HepG2 (cell line): ENCODE measurements at regions of chr4 and their contacts with region 1.

Region 1: DNA sequence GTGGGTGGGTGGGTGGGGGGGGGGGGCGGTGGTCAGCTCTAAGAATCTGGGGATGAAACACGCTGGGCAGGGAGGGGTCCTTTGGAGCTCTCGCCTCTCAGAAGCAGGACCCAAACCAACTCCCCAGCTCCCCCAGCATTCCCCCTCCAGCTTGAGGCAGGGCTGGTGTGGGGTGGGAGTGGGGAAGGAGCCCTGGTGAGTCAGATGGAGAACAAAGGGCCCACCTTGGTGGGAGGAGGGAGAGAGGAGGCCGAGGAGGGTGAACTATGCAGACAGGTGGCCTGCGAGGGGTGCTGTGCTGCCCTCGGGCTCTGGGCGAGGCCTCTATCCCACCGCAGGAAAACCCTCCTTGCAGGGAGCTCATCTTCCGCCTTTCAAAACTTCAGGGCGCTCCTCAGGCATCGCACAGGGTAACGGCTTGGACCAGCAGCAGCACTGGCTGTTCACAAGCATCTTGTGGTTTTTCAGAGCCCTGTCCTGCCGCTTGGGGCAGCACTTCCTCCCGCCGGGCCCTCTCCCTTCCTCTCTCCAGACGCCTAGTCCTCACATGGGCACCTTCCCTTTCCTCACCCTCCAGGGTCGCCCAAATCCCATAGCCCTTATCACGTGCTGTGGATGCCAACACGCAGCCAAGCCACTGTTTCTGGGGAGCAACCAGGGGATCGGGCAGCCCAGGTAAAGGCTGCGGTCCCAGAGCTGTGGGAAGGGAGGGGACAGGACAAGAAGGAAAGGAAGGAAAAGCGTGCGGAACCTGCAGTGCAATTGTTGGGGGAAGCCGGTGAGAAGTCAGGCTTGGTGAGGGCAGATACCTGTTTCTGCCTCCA is 34.0 kb upstream of the GRPEL1 start:
- DNase-seq: peak; percentile 52
- ATAC-seq: peak; percentile 78
- H3K4me3 ChIP-seq: peak overlapping the region; percentile 80 to 88 (median 82); a peak in 5 of 6 replicates
- H3K27ac ChIP-seq: no peak overlapping the region
- H3K4me1 ChIP-seq: peaks cover 40% of the 10 kb centered on the region
- H3K27me3 ChIP-seq: peaks cover 0 to 12% of the 10 kb centered on the region in 2 experiments; a peak in 2 of 5 replicates
- CTCF ChIP-seq: peak; percentile 91
- EP300 ChIP-seq: no peak
- POLR2A ChIP-seq: no peak
- RAD21 ChIP-seq: peak; percentile 55; the same call in 1 of the 2 replicates

Region 2: GRCh38 chr4:7167706-7168105 is 65.8 kb after region 1 on chr4:
- CTCF ChIA-PET with region 1: no interaction called
- POLR2A ChIA-PET with region 1: interaction called, 7 read pairs
- in situ Hi-C with region 1: no loop called
- intact Hi-C with region 1: loop called (anchors 2 kb)
- DNase-seq: peak; percentile 40
- ATAC-seq: peak; percentile 81
- H3K4me3 ChIP-seq: no peak overlapping the region; a peak in 1 of 6 replicates
- H3K27ac ChIP-seq: no peak overlapping the region
- H3K4me1 ChIP-seq: peaks cover 27% of the 10 kb centered on the region
- H3K27me3 ChIP-seq: peaks cover 0 to 20% of the 10 kb centered on the region in 2 experiments; a peak in 1 of 5 replicates
- CTCF ChIP-seq: no peak
- EP300 ChIP-seq: no peak
- POLR2A ChIP-seq: no peak
- RAD21 ChIP-seq: no peak